Dorsolateral prefrontal cortex (tissue), 120 donors: ENCODE measurements at regions of chr9 and their contacts with region 1.

Region 1: GRCh38 chr9:119968836-119969707 is 599.8 kb upstream of the BRINP1 start:
- DNase-seq: peak; percentile 69 to 93 (median 88)
- H3K4me3 ChIP-seq: no peak overlapping the region
- H3K27ac ChIP-seq: peak overlapping the region in 2 of 59 donors; percentile 15 to 41
- H3K27me3 ChIP-seq: no peaks in the 10 kb centered on the region
- CTCF ChIP-seq: peak; percentile 81 to 96 (median 90)

Region 2: DNA sequence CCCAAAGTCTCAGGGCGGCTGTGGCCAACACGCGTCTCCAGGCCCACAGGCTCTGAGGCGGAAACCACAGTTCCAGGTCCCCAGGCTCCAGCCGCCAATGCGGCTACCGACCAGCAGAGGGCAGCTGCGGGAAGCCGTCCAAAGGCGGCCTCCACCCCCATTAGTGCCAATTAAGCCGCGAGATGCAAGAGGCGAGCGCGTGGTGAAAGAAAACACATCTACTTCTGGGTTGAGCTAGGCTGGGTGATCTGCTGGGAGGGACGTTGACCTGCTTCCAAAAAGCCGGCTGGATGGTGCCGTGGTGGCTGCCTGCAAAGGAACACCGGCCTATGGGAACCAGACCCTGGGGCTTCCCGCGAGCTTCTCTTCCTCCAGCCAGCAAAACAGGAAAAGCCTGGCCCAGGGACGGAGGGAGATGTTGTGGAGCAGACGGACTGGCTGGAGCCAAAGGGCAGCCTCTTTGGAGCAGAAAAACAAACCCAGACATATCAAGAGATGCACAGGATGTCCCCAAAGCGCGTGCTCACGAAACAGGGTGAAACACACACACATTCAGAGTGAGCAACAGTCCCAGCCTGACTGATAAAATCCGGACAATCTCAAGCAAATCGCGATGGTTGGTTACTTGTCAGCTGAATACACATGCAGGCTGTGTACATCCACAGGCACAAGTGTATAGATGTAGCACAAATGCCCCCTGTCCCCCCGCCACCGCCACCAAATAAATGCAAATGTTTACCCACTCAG is 412.8 kb before region 1 on chr9:
- intact Hi-C with region 1: loop called (anchors 2 to 10 kb)
- DNase-seq: peak; percentile 63 to 86 (median 77)
- H3K4me3 ChIP-seq: peak overlapping the region in 58 of 59 donors; percentile 7 to 68 (median 45)
- H3K27ac ChIP-seq: peak overlapping the region in 42 of 59 donors; percentile 11 to 81 (median 52)
- H3K27me3 ChIP-seq: no peaks in the 10 kb centered on the region
- CTCF ChIP-seq: peak; percentile 78 to 98 (median 94)

Region 3: GRCh38 chr9:119667163-119667562 is 301.9 kb before region 1 on chr9:
- intact Hi-C with region 1: loop called in 1 of 2 experiments (anchors 10 kb)
- DNase-seq: no peak
- H3K4me3 ChIP-seq: no peak overlapping the region
- H3K27ac ChIP-seq: no peak overlapping the region
- H3K27me3 ChIP-seq: no peaks in the 10 kb centered on the region
- CTCF ChIP-seq: peak in 6 of 56 donors; percentile 6 to 43 (median 30)

Region 4: GRCh38 chr9:119802621-119803020 is 166.5 kb before region 1 on chr9:
- intact Hi-C with region 1: loop called in 1 of 2 experiments (anchors 10 kb)
- DNase-seq: peak; percentile 48 to 84 (median 78)
- H3K4me3 ChIP-seq: peak overlapping the region in 9 of 59 donors; percentile 0 to 18 (median 14)
- H3K27ac ChIP-seq: peak overlapping the region in 56 of 59 donors; percentile 10 to 88 (median 68)
- H3K27me3 ChIP-seq: no peaks in the 10 kb centered on the region
- CTCF ChIP-seq: peak in 5 of 56 donors; percentile 9 to 21 (median 13)

Region 5: GRCh38 chr9:119905724-119906123 is 63.3 kb before region 1 on chr9:
- intact Hi-C with region 1: no loop called
- DNase-seq: no peak
- H3K4me3 ChIP-seq: no peak overlapping the region
- H3K27ac ChIP-seq: no peak overlapping the region
- H3K27me3 ChIP-seq: no peaks in the 10 kb centered on the region
- CTCF ChIP-seq: no peak

Region 6: DNA sequence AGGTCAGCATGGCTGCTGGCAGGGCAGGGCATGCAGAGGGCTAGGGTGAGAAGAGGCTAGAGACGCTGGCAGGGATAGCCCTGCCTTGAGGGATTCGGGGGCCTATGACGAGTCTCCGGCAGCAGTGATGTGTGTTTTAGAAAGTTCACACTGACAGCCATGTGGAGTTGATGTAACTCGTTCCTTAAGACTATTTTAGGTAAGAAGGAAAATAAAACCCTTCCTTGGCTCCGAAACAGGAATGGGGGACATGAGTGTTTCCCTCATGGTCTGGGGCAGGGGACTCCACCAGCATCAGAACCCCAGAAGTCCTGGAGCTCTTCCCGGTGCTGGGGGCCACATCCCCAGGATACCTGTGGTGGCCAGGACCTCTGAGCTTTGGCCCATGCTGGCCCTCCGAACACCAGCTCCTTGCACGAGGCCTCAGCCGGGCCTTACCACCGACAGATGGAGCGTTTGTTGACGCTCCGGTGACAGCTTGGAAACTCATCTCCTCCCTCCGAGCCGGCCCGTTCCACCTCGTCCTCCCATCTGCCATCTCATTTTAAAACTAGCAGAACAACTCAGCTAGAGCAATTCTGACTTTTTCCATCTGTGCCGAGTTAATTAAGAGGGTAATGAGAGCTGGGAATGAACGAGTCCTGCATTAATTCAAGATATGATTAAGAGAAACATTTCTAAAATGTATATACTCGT is 273.2 kb after region 1 on chr9:
- intact Hi-C with region 1: no loop called
- DNase-seq: peak in 3 of 10 donors; percentile 35 to 88 (median 51)
- H3K4me3 ChIP-seq: no peak overlapping the region
- H3K27ac ChIP-seq: peak overlapping the region in 2 of 59 donors; percentile 3 to 87
- H3K27me3 ChIP-seq: no peaks in the 10 kb centered on the region
- CTCF ChIP-seq: no peak